Transverse colon (tissue), 4 donors: ENCODE measurements at regions of chr9 and their contacts with region 1.

Region 1: GRCh38 chr9:893843-894420 is 52.4 kb downstream of the DMRT1 start:
- DNase-seq: peak; percentile 64
- H3K4me3 ChIP-seq: no peak overlapping the region
- H3K27ac ChIP-seq: no peak overlapping the region
- H3K4me1 ChIP-seq: peaks cover 0 to 5% (median 4%) of the 10 kb centered on the region in 4 donors
- H3K27me3 ChIP-seq: peaks cover 18% of the 10 kb centered on the region
- CTCF ChIP-seq: peak; percentile 69 to 92 (median 79)
- EP300 ChIP-seq: no peak
- POLR2A ChIP-seq: no peak

Region 2: DNA sequence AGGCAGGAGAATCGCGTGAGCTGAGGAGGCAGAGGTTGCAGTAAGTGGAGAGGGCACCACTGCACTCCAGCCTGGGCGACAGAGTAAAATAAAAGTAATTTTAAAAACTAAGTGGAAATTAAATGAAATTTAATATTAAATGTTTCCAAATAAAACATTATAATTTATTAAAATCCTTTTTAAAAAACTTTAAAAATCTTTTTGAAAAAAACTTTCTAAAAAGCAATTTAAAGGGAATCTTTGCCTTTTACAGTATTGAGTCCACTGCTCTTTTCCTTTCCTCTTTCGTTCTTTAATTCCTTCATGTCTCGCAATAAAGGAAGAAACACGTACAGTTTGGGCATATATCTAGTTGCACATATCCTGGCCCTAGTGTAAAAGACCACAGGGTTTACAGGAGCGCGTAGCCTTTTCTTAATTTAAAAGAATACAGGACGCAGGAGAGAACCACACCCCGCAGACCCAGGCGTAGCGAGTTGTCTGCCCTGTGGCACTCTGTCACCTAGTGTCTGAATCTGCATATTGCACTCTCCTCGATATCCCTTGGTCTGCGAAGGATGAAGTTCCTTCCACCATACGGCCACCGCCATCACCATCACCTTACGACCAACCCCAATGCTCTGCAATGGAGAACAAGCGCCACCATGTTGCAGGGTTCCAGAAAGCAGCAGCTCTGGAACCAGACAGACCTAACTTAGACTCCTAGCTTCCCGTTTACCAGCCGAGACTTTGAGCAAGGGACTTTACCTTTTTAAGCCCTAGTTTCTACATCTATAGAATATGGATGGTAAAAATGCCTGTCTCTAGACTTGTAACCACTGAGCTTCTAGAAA is 130.0 kb before region 1 on chr9:
- in situ Hi-C with region 1: no loop called
- intact Hi-C with region 1: no loop called
- DNase-seq: peak; percentile 76
- H3K4me3 ChIP-seq: no peak overlapping the region
- H3K27ac ChIP-seq: peak overlapping the region in 1 of 4 donors; percentile 29
- H3K4me1 ChIP-seq: peaks cover 0 to 6% (median 2%) of the 10 kb centered on the region in 4 donors
- H3K27me3 ChIP-seq: peaks cover 17% of the 10 kb centered on the region
- CTCF ChIP-seq: peak; percentile 89 to 96 (median 94)
- EP300 ChIP-seq: no peak
- POLR2A ChIP-seq: no peak

Region 3: DNA sequence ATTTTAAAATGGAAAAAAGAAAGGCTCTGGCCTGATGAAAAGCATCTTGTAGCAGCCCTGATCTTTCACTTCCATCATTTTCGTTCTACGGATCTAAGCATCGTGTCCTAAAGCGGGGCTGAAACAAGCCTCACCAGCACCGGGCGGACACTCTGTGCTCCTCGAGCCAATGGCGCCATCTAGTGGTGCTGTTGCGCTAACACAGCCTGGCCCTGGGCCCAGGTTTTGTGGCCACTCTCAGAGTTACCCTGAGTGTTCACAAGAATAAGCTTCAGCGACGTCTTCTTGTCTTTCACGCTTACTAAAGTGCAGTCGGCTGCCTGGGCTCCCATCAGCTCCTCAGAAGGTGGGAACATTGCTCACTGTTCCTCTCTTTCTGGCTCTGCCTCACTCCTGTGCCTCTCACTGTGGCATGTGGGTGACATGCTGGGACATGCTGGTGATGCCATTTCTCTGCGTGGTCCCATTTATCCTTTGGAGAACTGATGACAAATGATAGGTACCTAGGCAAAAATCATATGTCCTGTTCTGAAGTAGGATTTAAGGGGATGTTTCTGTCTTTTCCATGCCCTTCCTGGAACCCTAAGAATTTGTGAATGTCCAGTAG is 115.3 kb after region 1 on chr9:
- in situ Hi-C with region 1: loop called (anchors 5 to 10 kb)
- intact Hi-C with region 1: no loop called
- DNase-seq: peak; percentile 88
- H3K4me3 ChIP-seq: no peak overlapping the region
- H3K27ac ChIP-seq: no peak overlapping the region
- H3K4me1 ChIP-seq: peaks cover 0 to 6% (median 0%) of the 10 kb centered on the region in 4 donors
- H3K27me3 ChIP-seq: peaks cover 42% of the 10 kb centered on the region
- CTCF ChIP-seq: peak; percentile 91 to 99 (median 97)
- EP300 ChIP-seq: no peak
- POLR2A ChIP-seq: no peak